ENCODE measurements at regions of chr2 and their contacts with region 1.

Region 1: GRCh38 chr2:44479122-44479887 is 117.6 kb downstream of the CAMKMT start:
- DNase-seq: peak; percentile 39
- ATAC-seq: peak; percentile 100
- H3K4me3 Mint-ChIP-seq: no peak overlapping the region
- H3K27ac Mint-ChIP-seq: no peak overlapping the region
- H3K4me1 Mint-ChIP-seq: peaks cover 9% of the 10 kb centered on the region
- H3K27me3 Mint-ChIP-seq: no peaks in the 10 kb centered on the region

Region 2: GRCh38 chr2:44004735-44005602 is 474.3 kb before region 1 on chr2:
- CTCF ChIA-PET with region 1: no interaction called
- POLR2A ChIA-PET with region 1: no interaction called
- intact Hi-C with region 1: no loop called
- DNase-seq: no peak
- ATAC-seq: no peak
- H3K4me3 Mint-ChIP-seq: no peak overlapping the region
- H3K27ac Mint-ChIP-seq: no peak overlapping the region
- H3K4me1 Mint-ChIP-seq: peaks cover 10% of the 10 kb centered on the region
- H3K27me3 Mint-ChIP-seq: peaks cover 1% of the 10 kb centered on the region

Region 3: DNA sequence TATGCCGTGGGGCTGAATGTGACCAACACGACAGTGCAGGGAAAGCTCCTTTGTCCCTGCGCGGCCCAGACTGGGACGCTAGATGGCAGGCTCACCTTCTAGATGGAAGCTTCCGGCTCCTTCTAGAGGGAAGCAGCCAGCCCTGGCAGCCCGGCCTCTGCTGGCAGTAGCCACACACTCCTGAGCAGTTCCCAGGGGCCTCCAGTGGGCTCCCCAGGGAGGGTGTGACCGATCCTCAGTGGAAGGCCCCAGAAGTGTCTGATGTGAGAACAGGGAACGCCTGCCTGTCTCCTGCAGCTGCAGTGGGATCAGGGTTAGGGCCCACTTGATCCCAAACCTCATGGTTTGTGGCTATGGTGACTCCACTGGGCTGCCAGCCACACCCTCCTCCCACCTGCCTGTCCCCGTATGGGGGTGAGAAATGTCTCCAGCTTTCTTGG is 435.0 kb before region 1 on chr2:
- CTCF ChIA-PET with region 1: interaction called, 9 read pairs
- POLR2A ChIA-PET with region 1: no interaction called
- intact Hi-C with region 1: loop called (anchors 1 kb)
- DNase-seq: peak; percentile 91
- ATAC-seq: peak; percentile 100
- H3K4me3 Mint-ChIP-seq: no peak overlapping the region
- H3K27ac Mint-ChIP-seq: no peak overlapping the region
- H3K4me1 Mint-ChIP-seq: no peaks in the 10 kb centered on the region
- H3K27me3 Mint-ChIP-seq: peaks cover 2% of the 10 kb centered on the region

Region 4: DNA sequence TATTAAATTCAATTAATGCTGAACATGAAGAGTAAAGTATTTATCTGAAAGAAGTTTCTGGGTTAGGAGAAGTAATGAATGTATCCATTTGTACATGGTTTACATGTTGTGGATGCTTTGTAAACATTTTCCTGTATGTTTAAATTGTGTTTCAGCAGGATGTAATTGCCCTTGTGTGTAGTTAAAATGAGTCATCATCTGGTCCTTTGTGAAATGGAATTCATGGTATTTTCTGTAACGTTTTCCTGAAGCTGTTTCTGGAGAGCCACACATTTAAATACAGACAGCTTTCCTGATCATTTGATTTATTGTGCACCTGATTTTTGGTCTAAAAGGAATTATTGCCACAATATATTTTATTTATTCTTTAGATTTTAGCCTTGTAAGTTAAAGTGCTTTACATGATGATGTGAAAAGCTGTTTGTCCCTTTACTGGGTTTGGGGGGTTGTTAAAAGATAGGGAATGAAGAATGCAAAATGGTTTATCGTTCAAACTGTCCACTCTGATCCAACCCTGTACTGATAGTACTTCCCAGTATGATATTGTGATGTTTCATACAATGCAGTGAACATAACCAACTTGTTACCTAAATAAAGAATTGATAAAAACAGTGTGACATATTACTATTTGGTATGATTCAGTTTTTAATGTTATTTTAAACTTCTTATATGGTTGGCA is 245.7 kb before region 1 on chr2:
- CTCF ChIA-PET with region 1: no interaction called
- POLR2A ChIA-PET with region 1: no interaction called
- intact Hi-C with region 1: no loop called
- DNase-seq: no peak
- ATAC-seq: no peak
- H3K4me3 Mint-ChIP-seq: no peak overlapping the region
- H3K27ac Mint-ChIP-seq: no peak overlapping the region
- H3K4me1 Mint-ChIP-seq: peaks cover 29% of the 10 kb centered on the region
- H3K27me3 Mint-ChIP-seq: no peaks in the 10 kb centered on the region

Region 5: DNA sequence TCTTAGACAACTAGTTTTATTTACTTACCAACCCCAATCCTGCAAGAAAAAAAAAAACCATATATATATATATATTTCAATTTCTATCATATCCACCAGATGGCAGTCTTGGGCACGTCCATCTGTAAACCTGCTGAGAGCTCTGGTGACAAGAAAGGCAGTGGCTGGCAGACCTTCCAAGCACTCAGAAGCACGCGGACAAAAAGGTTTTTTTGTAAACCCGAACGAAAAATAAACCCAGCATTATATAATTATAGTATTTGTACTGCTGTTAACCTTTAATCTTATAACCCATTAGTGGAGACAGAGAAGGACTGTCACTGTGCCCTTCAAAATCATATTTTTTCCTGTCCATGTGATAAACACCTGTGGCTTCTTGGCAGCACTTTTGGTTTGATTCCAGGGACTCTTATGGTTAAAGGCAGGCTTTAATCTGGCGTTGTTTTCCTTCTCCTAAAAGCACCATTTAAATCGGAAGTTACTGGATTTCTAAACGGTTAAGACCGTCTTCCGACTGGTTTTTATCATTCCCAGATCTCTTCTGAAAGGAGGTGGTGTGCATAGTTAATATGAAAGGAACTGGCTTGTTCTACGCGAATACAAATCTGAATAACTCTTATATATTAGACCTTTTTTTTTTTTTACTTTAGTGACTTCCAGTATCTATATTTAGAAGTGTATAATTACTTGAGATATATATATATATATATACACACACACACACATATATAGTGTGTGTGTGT is 235.0 kb before region 1 on chr2:
- CTCF ChIA-PET with region 1: interaction called, 4 read pairs
- POLR2A ChIA-PET with region 1: no interaction called
- intact Hi-C with region 1: loop called in 1 of 2 experiments (anchors 1 kb)
- DNase-seq: peak; percentile 73
- ATAC-seq: peak; percentile 86
- H3K4me3 Mint-ChIP-seq: peak overlapping the region; percentile 67
- H3K27ac Mint-ChIP-seq: peak overlapping the region; percentile 47
- H3K4me1 Mint-ChIP-seq: peaks cover 16% of the 10 kb centered on the region
- H3K27me3 Mint-ChIP-seq: no peaks in the 10 kb centered on the region

Region 6: GRCh38 chr2:44456946-44457345 is 22.4 kb before region 1 on chr2:
- CTCF ChIA-PET with region 1: interaction called, 33 read pairs
- POLR2A ChIA-PET with region 1: no interaction called
- intact Hi-C with region 1: no loop called
- DNase-seq: no peak
- ATAC-seq: no peak
- H3K4me3 Mint-ChIP-seq: no peak overlapping the region
- H3K27ac Mint-ChIP-seq: no peak overlapping the region
- H3K4me1 Mint-ChIP-seq: no peaks in the 10 kb centered on the region
- H3K27me3 Mint-ChIP-seq: no peaks in the 10 kb centered on the region

Region 7: GRCh38 chr2:44490726-44491125 is 11.4 kb after region 1 on chr2:
- CTCF ChIA-PET with region 1: interaction called, 30 read pairs
- POLR2A ChIA-PET with region 1: no interaction called
- intact Hi-C with region 1: no loop called
- DNase-seq: no peak
- ATAC-seq: no peak
- H3K4me3 Mint-ChIP-seq: no peak overlapping the region
- H3K27ac Mint-ChIP-seq: no peak overlapping the region
- H3K4me1 Mint-ChIP-seq: no peaks in the 10 kb centered on the region
- H3K27me3 Mint-ChIP-seq: no peaks in the 10 kb centered on the region

Region 8: GRCh38 chr2:44645937-44646336 is 166.6 kb after region 1 on chr2:
- CTCF ChIA-PET with region 1: interaction called, 5 read pairs
- POLR2A ChIA-PET with region 1: interaction called, 13 read pairs
- intact Hi-C with region 1: no loop called
- DNase-seq: no peak
- ATAC-seq: no peak
- H3K4me3 Mint-ChIP-seq: no peak overlapping the region
- H3K27ac Mint-ChIP-seq: no peak overlapping the region
- H3K4me1 Mint-ChIP-seq: no peaks in the 10 kb centered on the region
- H3K27me3 Mint-ChIP-seq: no peaks in the 10 kb centered on the region

Region 9: DNA sequence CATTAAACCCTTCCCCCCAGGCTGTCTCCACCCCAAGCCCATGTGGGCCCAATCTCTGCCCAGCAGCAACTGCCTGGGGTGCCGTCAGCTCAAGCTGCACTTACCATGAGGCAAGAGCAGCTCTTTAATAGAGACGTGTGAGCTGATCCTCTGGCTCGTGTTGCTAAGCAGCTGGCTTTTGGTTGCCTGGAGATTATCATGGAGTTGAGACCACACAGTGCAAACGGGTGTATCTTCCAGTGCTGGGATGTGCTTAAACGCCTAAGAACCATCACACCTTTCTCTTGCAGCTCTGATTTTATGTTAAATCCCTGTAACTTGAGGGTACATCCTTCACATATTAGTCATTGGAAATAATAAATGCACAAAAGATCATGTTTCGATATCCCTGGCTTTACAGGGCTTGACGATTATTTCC is 1443.3 kb after region 1 on chr2:
- CTCF ChIA-PET with region 1: no interaction called
- POLR2A ChIA-PET with region 1: no interaction called
- intact Hi-C with region 1: no loop called
- DNase-seq: no peak
- ATAC-seq: no peak
- H3K4me3 Mint-ChIP-seq: no peak overlapping the region
- H3K27ac Mint-ChIP-seq: no peak overlapping the region
- H3K4me1 Mint-ChIP-seq: no peaks in the 10 kb centered on the region
- H3K27me3 Mint-ChIP-seq: no peaks in the 10 kb centered on the region

Measured in activated CD4-positive, alpha-beta T cell treated with anti-CD3 and anti-CD28 coated beads for 36 hours (primary cell).